Right ventricle myocardium inferior (tissue), 1 donor: ENCODE measurements at regions of chr7 and their contacts with region 1.

Region 1: GRCh38 chr7:151759591-151760042 is 117.3 kb downstream of the PRKAG2 start:
- DNase-seq: no peak
- ATAC-seq: peak; percentile 42

Region 2: GRCh38 chr7:151315038-151315655 is 444.5 kb before region 1 on chr7:
- intact Hi-C with region 1: loop called (anchors 5 kb)
- DNase-seq: no peak
- ATAC-seq: peak; percentile 79

Region 3: GRCh38 chr7:151368136-151368571 is 391.5 kb before region 1 on chr7:
- intact Hi-C with region 1: loop called (anchors 1 kb)
- DNase-seq: peak; percentile 88
- ATAC-seq: peak; percentile 95

Region 4: DNA sequence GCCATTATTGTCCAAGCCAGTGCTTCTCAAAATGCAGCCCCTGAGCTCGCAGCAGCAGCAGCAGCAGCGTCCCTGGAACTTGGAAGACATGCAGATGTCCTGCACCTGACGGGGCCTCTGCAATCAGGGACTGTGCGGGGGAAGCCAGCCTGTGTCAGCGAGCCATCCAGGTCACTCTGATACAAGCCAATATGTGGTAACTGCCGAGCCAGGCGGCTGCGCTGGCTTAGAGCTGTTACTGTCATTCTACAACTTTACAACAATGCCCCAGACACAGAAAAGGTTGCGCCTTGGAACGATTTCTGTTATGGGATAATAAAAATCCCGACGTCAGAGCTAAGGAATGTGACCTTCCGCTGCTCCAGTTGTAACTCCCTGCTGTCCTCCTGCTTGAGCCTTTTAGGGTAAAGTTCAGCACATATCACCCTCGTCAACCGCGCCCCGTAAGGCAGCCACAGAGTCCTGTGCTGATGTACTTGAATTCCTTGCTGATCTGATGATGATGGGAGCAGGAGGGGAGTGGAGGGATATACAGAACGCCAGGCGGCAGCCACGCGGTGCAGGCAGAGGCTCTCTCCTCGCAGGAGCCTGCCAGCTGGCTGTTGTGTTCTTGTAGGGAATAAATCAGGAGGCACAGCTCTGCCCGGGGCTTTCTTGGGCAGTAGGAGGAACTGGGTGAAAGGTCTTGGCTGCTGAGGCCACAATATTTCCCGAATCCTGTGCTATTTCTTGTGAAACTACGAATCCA is 299.7 kb before region 1 on chr7:
- intact Hi-C with region 1: loop called (anchors 5 kb)
- DNase-seq: peak; percentile 92
- ATAC-seq: peak; percentile 87

Region 5: DNA sequence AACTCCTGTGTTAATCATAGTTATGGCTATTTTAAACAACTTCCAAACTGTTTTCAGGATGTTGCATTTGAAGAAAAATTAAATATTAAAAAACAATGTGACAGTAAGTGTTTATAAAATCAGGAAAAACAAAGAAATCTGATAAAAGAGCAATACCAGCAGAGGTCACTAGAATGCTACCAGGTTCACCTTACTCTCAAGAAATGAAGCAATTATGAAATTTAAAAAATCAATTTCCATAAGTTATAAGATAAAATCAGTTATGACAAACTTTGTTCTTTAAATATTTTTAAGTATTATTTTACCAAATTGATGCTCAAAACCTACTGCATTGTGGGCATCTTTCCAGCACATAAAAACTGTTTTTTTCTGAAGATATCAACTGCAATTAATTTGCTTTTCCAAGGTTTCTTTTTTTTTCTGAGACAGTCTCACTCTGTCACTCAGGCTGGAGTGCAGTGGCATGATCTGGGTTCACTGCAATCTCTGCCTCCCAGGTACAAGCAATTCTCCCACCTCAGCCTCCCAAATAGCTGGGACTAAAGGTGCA is 189.2 kb before region 1 on chr7:
- intact Hi-C with region 1: loop called (anchors 5 kb)
- DNase-seq: no peak
- ATAC-seq: no peak

Region 6: DNA sequence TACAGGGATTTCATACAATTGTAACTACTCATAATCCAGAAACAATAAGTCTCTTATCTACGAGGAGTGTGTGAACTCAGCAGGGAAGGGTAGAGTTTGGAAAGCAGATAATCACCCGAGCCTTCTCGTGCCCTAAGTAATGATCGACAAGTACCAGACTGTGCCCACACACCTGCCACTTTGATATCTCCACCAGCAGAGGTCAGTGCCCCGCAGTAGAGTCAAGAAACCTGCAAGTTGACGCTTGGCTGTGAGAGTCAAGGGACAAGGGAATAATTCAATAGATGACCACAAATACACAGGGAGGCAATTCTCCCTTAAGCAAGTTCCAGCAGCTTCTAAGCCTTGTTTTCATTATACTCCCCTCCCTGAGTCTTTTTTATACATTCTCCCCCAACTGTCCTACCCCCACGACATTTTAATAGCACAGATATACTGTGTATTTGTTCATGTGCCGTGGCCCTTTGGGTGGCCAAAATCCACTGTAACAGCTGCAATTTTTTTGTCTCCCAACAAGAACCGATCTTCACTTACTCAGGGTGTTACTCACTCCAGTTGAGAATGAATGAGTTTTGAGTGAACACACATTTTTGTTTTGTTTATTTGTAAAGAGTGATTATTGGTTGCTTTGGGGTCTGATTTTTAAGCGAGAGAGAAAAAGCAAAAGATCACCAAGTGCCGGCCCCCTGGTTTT is 133.0 kb before region 1 on chr7:
- intact Hi-C with region 1: loop called (anchors 5 kb)
- DNase-seq: no peak
- ATAC-seq: peak; percentile 47